ENCODE measurements at regions of chr16 and their contacts with region 1.

Region 1: DNA sequence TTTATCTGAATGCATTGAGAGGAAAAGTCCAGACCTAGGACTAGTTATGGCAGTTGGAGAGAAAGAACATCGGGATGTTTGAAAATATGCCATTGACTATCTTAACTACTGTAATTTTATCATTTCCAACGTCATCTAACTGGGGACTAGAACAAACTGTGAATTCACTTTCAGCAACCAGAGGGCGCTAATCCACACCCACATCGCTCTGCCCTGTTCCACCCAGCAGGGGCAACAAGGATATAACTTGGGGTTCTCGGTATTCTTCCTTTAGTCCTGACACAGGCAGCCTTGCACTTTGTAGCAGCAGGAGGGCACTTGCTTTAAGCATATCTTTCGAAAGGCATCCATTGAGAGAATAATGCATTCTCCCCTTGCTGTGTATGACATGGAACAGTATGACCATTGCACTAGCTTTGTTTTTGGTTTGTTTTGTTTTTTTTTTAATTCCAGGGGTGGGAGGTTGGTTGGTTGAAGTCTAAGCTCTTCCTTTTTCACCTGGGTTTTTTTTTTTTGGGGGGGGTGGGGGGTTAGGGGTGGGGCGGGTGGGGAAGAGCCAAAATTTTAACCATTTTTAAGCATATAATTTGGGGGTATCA is 31.5 kb downstream of the SIAH1 start:
- DNase-seq: no peak

Region 2: GRCh38 chr16:48373258-48374029 is 19.8 kb after region 1 on chr16:
- intact Hi-C with region 1: loop called in 1 of 2 experiments (anchors 2 kb)
- DNase-seq: no peak

Region 3: GRCh38 chr16:48535831-48536613 is 182.4 kb after region 1 on chr16:
- intact Hi-C with region 1: loop called in 1 of 2 experiments (anchors 5 kb)
- DNase-seq: peak; percentile 93

Region 4: DNA sequence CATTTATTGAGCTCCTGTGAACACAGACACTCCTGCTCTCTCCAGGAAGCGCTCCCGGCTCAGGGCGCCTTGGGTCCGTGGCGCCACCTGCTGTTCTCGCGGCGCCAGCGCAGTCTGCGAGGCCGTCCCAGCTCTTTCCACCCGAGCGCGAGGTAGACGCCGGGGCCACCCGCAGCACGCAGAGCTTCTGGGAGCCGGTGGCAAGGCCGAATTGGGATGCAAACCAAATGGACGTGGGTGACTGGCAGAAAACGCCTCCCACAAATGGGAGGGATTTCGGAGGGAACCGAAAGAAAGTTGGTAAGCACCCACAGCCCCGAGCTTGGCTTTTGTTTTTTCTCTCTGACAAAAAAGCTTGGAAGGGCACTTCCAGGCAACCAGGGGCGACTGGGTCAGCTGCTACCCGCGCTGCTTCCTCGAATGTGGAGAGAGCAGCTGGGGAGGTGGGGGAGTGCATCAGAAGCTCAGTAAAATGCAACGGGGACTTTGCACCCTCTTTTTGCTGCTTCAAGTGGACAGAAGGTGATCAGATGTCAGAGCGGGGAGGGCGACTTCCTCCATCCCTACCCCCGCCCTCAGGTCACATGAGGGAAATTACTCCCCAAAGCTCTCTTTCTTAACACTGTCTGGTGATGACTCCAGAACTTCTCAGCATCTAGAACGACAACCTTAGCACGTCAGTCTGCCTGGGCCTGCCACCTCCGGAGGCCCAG is 269.8 kb after region 1 on chr16:
- intact Hi-C with region 1: loop called in 1 of 2 experiments (anchors 10 kb)
- DNase-seq: peak; percentile 95

Measured in posterior vena cava (tissue), 2 donors.